ENCODE measurements at regions of chr7 and their contacts with region 1.

Region 1: GRCh38 chr7:45923290-45923689 is 2.2 kb upstream of the IGFBP3 start:
- DNase-seq: peak; percentile 71
- H3K4me3 Mint-ChIP-seq: no peak overlapping the region
- H3K27ac Mint-ChIP-seq: no peak overlapping the region
- H3K4me1 Mint-ChIP-seq: peaks cover 45% of the 10 kb centered on the region
- H3K27me3 Mint-ChIP-seq: no peaks in the 10 kb centered on the region
- CTCF ChIP-seq: peak; percentile 88

Region 2: DNA sequence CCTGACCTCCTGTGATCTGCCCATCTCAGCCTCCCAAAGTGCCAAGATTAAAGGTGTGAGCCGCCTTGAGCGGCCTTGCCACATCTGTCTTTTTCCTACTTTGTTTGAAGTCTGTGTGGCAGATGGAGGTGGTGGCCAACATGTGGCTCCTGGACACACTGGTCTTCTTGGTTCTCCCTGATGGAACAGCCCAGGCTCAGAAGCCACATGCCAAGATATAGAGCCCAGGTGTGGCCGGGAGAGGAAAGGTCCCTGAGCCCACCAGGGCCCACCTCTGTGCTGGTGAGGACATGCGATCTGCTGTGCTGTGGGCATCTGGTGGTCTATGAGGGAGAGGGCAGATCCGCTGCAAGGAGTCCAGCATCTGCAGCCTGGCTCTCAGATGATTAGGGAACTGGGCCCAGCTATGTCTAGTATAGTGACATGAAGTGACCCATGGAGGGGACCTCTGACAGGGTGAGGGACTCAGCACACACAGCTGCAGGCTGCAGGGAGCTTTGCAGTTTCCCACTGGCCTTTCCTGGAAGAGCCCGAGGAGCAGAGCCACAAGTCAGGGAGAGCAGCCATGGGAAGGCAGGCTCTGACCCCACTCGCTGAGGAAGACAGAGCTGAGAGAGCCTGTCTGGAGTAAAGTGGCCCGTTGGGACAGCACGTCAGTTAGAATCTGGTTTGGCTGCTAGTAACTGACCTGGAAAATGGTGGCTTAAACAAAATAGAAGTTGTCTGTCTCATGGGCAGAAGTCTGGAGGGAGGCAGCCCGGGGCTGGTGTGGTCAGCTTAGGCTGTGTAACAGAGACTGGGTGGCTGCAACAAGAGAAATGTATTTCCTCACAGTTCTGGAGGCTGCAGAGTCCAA is 323.2 kb before region 1 on chr7:
- CTCF ChIA-PET with region 1: no interaction called
- POLR2A ChIA-PET with region 1: no interaction called
- intact Hi-C with region 1: no loop called
- DNase-seq: no peak
- H3K4me3 Mint-ChIP-seq: no peak overlapping the region
- H3K27ac Mint-ChIP-seq: no peak overlapping the region
- H3K4me1 Mint-ChIP-seq: no peaks in the 10 kb centered on the region
- H3K27me3 Mint-ChIP-seq: peaks cover 36% of the 10 kb centered on the region
- CTCF ChIP-seq: no peak

Region 3: GRCh38 chr7:45978010-45978681 is 54.9 kb after region 1 on chr7:
- CTCF ChIA-PET with region 1: interaction called, 5 read pairs
- POLR2A ChIA-PET with region 1: interaction called, 3 read pairs
- intact Hi-C with region 1: loop called (anchors 1 kb)
- DNase-seq: peak; percentile 93
- H3K4me3 Mint-ChIP-seq: peak overlapping the region; percentile 62
- H3K27ac Mint-ChIP-seq: peak overlapping the region; percentile 98
- H3K4me1 Mint-ChIP-seq: peaks cover 26% of the 10 kb centered on the region
- H3K27me3 Mint-ChIP-seq: no peaks in the 10 kb centered on the region
- CTCF ChIP-seq: no peak

Region 4: DNA sequence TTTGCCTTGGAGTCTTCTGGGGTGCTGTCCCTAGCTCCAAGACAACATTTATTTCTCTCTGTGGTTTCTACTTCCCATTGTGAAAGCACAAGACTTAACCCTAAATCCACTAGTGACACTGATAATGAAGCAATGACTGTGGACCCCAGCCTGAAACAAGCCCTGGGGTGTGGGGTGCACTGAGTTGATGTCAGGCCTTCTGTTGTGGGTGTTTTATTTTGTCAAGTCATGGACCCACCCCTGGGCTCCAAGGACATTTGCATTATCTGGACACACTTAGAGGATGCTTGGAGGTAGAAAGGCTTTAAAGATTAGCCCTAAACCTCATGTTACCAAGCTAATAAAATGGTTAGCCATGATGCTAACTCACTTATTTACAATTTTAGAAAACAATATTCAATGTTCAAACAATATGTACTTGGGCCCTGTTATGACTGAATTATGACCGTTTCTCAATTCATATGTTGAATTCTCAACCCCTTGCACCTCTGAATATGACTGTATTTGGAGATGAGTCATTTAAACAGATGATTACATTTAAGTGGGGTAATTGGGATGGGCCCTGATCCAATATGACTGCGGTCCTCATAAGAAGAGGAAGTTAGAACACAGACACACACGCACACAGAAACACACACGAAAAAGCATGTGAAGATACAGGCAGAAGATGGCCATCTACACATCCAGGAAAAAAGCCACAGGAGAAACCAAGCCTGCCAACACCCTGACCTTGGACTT is 135.0 kb after region 1 on chr7:
- CTCF ChIA-PET with region 1: no interaction called
- POLR2A ChIA-PET with region 1: no interaction called
- intact Hi-C with region 1: no loop called
- DNase-seq: peak; percentile 23
- H3K4me3 Mint-ChIP-seq: no peak overlapping the region
- H3K27ac Mint-ChIP-seq: no peak overlapping the region
- H3K4me1 Mint-ChIP-seq: no peaks in the 10 kb centered on the region
- H3K27me3 Mint-ChIP-seq: no peaks in the 10 kb centered on the region
- CTCF ChIP-seq: no peak

Region 5: GRCh38 chr7:46220066-46220630 is 296.9 kb after region 1 on chr7:
- CTCF ChIA-PET with region 1: interaction called, 3 read pairs
- POLR2A ChIA-PET with region 1: interaction called, 4 read pairs
- intact Hi-C with region 1: loop called (anchors 1 kb)
- DNase-seq: peak; percentile 68
- H3K4me3 Mint-ChIP-seq: no peak overlapping the region
- H3K27ac Mint-ChIP-seq: peak overlapping the region; percentile 89
- H3K4me1 Mint-ChIP-seq: peaks cover 11% of the 10 kb centered on the region
- H3K27me3 Mint-ChIP-seq: peaks cover 4% of the 10 kb centered on the region
- CTCF ChIP-seq: no peak

Region 6: GRCh38 chr7:46357290-46357689 is 434.0 kb after region 1 on chr7:
- CTCF ChIA-PET with region 1: interaction called, 191 read pairs
- POLR2A ChIA-PET with region 1: no interaction called
- intact Hi-C with region 1: loop called (anchors 1 kb)
- DNase-seq: no peak
- H3K4me3 Mint-ChIP-seq: no peak overlapping the region
- H3K27ac Mint-ChIP-seq: no peak overlapping the region
- H3K4me1 Mint-ChIP-seq: peaks cover 8% of the 10 kb centered on the region
- H3K27me3 Mint-ChIP-seq: no peaks in the 10 kb centered on the region
- CTCF ChIP-seq: no peak

Region 7: DNA sequence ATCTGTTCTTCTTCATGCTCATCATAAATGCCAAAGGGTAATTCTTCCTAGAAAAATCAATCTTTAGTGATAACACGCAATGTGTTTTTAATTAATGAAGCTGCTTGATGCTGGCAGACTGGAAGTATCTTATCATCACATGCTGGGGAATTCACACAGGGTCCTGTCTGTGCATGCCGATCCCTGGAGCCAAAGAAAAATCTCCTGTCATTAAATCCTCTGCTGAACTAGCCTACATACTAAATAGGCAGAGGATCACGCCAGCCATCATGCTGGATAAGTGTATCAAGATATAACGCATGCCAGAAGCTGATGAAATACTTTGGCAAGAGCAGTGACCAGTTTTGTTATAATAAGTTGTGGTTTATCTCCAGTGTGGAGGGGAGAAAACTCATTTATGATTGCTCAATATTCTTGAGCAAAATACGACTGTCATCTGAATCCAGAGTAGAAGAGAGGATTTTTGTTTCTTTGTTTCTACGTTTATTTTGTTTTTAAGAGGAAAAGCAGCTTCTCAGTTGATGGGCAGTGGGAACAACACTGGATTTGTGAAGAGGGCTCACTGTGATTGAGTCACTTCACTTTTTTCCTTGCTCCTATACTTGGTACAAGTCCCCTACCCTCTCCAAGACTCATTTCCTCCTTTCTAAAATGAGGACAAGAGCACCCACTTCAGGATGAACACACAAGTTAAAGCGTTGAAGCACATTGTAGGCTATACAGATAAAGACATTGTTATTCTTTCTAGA is 1009.6 kb after region 1 on chr7:
- CTCF ChIA-PET with region 1: interaction called, 3 read pairs
- POLR2A ChIA-PET with region 1: interaction called, 3 read pairs
- intact Hi-C with region 1: loop called (anchors 1 kb)
- DNase-seq: peak; percentile 96
- H3K4me3 Mint-ChIP-seq: peak overlapping the region; percentile 12
- H3K27ac Mint-ChIP-seq: peak overlapping the region; percentile 86
- H3K4me1 Mint-ChIP-seq: peaks cover 46% of the 10 kb centered on the region
- H3K27me3 Mint-ChIP-seq: no peaks in the 10 kb centered on the region
- CTCF ChIP-seq: peak; percentile 48

Region 8: DNA sequence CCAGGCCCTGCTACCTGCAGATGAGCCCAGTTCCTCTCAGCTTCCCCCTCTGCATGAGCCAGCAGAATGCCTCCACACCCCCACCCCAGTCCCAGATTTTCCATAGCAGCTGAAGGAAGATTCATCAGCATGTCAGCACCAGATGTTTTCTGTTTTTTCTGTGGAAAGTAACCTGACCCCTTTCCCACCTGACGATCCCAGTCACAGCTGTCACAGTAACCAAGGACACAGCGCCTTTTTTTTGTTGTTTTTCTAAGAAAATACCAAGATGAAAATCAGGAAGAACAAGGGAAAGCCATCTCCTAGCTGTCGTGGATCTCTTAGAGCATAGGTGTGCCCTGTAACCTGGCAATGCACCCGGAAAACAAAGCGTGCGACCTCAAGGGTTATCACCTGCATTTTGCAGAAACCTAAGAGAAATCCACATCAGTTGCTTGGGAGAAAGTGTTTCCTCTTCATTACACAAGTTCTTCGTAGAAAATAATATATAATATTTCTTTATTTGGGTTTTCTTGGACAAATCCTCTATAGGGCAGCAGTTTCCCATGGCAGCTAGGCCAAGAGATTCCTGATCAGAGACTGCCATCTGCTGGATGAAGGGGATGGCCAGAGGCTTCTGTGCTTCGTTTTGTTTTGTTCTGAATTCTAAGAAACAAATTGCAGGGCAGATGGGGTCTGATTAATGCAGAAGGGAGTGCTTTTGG is 1256.7 kb after region 1 on chr7:
- CTCF ChIA-PET with region 1: interaction called, 68 read pairs
- POLR2A ChIA-PET with region 1: no interaction called
- intact Hi-C with region 1: loop called (anchors 1 kb)
- DNase-seq: peak; percentile 76
- H3K4me3 Mint-ChIP-seq: no peak overlapping the region
- H3K27ac Mint-ChIP-seq: no peak overlapping the region
- H3K4me1 Mint-ChIP-seq: no peaks in the 10 kb centered on the region
- H3K27me3 Mint-ChIP-seq: peaks cover 20% of the 10 kb centered on the region
- CTCF ChIP-seq: peak; percentile 85

Measured in MCF 10A (cell line).